ENCODE measurements at regions of chr9 and their contacts with region 1.

Region 1: DNA sequence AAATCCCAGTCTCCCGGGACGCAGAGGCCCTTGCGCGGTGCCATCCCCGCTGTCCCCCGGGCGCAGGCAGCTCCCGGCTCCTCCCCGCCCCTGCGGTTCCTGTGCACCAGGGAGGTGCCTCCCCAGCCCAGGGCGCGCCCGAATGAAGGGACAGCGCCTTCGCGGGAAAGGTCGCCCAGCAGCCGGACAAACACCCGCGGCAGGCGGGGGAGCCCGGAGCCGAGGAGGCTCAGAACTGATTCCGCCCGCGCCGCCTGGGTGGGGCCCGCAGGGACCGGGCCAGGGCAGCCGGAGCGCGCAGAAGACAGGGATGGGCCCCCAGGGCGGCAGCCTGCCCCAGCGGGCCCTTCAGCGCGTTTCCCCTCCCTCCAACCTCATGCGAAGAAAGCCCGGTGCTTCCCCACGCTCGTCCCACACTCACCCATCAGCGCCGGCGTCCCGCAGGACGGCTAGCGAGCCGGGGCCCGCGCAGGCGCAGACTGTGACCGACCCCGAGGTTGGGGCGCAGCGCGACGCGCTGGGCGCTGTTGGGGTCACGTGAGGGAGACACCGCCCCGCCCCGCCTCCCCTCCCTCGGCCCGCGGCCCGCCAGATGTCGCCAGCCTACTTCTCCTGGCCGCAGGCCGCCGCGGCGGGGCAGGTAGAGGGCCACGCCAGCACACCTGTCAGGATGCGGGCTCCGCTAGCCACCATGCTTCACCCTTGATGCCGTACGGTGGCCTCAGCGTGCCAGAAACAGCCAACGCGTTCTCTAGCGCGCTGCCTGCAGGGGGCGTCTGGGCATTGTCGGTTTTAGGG is at the start of gene SLC25A51:
- DNase-seq: peak; percentile 96
- H3K4me3 ChIP-seq: peak within 1 kb of the TSS; percentile 84 to 99 (median 90)
- H3K27ac ChIP-seq: peak within 1 kb of the TSS; percentile 89 to 99 (median 96)
- H3K4me1 ChIP-seq: peaks cover 13 to 23% (median 21%) of the 10 kb centered on the region in 4 donors
- H3K27me3 ChIP-seq: no peaks in the 10 kb centered on the region
- CTCF ChIP-seq: peak; percentile 85 to 98 (median 91)
- EP300 ChIP-seq: no peak
- POLR2A ChIP-seq: peak; percentile 70
- total RNA-seq, gene SLC25A51: 15.7 to 30.0 (median 24.1) TPM

Region 2: DNA sequence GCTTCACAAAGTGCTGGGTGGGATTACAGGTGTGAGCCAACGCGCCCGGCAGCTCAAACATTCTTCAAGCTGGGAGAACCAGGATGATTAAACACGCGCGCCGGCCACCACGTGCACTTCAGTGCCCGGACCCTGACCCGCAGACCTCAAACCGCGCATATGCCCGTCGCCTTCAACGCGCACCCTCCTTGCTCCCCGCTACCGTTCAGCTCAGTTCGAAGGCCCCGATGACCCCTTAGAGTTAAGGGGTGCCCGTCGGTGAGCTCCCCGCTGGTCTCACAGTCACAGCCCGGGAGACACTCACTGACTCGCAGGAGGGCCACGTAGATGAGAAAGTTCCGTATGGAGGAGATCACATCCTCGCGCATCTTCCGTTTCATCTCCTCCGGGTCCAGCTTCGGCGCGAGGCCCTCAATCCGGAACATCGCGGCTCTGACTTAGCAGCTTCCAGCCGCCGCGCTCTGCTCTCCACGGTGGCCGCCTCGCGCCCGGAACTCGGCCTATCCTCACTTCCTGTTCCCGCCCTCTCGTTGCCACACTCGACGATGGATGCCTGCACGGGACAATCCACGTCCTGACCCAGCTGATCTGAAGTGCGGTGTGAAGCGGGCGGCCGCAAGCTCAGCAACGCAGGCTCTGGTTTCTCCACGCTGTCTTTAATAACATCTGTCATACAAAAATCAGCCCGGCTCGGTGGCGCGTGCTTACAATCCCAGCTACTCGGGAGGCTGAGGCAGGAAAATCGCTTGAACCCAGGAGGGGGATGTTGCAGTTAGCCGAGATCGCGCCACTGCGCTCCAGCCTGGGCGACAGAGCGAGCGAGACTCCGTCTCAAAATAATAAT is 311.5 kb before region 1 on chr9 and contains the start of gene TOMM5:
- in situ Hi-C with region 1: loop called in 2 of 4 experiments (anchors 10 to 25 kb)
- intact Hi-C with region 1: no loop called
- DNase-seq: peak; percentile 94
- H3K4me3 ChIP-seq: peak within 1 kb of the TSS; percentile 56 to 86 (median 69)
- H3K27ac ChIP-seq: peak within 1 kb of the TSS; percentile 86 to 89 (median 88)
- H3K4me1 ChIP-seq: peaks cover 19 to 40% (median 25%) of the 10 kb centered on the region in 4 donors
- H3K27me3 ChIP-seq: no peaks in the 10 kb centered on the region
- CTCF ChIP-seq: no peak
- EP300 ChIP-seq: no peak
- POLR2A ChIP-seq: peak; percentile 89
- total RNA-seq, gene TOMM5: 14.3 to 70.3 (median 63.1) TPM

Region 3: GRCh38 chr9:38068866-38069629 is 165.2 kb after region 1 on chr9 and contains the start of gene SHB:
- in situ Hi-C with region 1: loop called in 1 of 4 experiments (anchors 25 kb)
- intact Hi-C with region 1: no loop called
- DNase-seq: peak; percentile 88
- H3K4me3 ChIP-seq: peak within 1 kb of the TSS; percentile 86 to 99 (median 94)
- H3K27ac ChIP-seq: peak within 1 kb of the TSS; percentile 93 to 98 (median 98)
- H3K4me1 ChIP-seq: peaks cover 11 to 58% (median 42%) of the 10 kb centered on the region in 4 donors
- H3K27me3 ChIP-seq: no peaks in the 10 kb centered on the region
- CTCF ChIP-seq: peak in 3 of 5 experiments; percentile 36 to 71 (median 55)
- EP300 ChIP-seq: no peak
- POLR2A ChIP-seq: peak; percentile 60
- total RNA-seq, gene SHB: 11.9 to 33.7 (median 22.2) TPM

Region 4: DNA sequence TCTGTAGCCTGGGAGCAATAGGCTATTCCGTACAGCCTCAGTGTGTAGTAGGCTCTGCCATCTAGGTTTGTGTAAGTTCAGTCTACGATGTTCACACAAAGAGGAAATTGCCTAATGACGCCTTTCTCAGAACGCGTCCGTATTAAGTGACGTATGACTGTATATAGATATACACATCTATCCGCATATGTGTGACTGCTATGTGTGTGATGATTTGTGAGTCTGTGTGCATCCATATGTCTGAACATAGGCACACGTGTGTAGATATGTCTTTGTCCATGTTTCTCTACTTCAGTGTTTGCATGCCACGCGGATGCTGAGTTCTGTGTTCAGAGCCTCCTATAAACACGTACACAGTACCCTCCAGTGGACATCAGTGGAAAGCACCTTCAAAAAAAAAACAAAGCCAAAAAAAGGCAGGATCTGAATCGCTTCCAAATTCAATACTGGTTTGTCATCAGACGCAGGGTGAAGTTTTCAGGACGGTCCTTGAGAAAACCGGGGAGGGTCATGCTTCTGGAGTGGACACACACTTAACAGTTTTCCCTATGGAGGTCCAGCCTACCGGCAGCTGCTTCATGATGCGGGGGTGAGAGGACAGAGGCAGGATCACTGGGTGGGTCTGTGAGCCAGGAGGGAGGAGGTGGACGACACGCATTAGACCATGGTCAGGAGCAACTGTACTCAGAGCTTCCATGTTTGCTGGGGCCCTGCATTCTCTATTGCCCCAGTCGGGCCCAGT is 459.2 kb after region 1 on chr9:
- in situ Hi-C with region 1: loop called in 3 of 4 experiments (anchors 25 kb)
- intact Hi-C with region 1: no loop called
- DNase-seq: peak; percentile 22
- H3K4me3 ChIP-seq: no peak overlapping the region
- H3K27ac ChIP-seq: no peak overlapping the region
- H3K4me1 ChIP-seq: peaks cover 0 to 7% (median 1%) of the 10 kb centered on the region in 4 donors
- H3K27me3 ChIP-seq: no peaks in the 10 kb centered on the region
- CTCF ChIP-seq: peak; percentile 38 to 55 (median 46)
- EP300 ChIP-seq: no peak
- POLR2A ChIP-seq: no peak